ENCODE measurements at regions of chr16 and their contacts with region 1.

Region 1: DNA sequence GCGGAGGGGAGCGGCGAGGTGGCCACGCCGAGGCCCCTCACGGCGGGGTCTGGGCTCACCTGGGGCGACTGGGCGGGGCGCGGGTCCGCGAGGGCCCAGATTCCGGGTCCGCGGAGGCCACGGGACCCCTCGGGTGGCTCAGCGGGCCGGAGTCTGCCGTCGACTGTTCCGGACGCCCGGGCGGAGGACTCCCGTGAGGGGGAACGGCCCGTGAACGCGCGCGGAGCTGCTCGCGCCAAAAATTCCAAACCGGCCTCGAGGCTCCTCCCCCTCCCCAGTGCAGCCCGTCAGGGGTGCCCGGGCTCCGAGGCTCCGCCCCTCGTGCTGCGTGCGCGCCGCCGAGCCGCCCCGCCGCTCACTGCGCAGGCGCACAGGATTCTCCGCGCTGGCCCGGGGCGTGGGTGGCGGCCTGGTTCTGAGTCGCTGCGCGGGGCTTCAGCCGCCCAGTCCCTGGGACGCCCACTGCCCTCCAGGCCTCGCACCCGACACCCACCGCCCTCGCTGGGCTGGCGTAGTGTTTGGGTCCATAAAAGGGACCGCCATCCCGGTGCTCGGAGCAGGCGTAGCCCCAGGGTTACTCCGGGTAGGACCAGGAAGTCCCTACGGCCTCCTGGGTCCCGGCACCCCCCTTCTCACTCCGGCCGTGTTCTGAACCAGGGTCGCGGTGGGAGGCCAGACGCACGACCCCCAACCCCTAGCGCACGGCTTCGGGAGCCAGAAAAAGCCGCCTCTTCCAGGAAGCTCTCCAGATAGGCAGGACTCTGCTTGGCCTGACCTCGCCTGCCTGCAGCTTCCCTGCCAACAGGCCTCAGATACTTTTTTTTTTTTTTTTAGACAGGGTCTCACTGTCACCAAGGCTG is at the start of gene PKMYT1:
- DNase-seq: peak; percentile 96
- ATAC-seq: peak; percentile 93
- H3K4me3 ChIP-seq: peak within 1 kb of the TSS; percentile 57 to 96 (median 82)
- H3K4me3 Mint-ChIP-seq: peak within 1 kb of the TSS; percentile 81
- H3K27ac ChIP-seq: peak within 1 kb of the TSS; percentile 71 to 83
- H3K27ac Mint-ChIP-seq: peak within 1 kb of the TSS; percentile 84
- H3K4me1 ChIP-seq: peaks cover 18 to 39% of the 10 kb centered on the region in 2 donors
- H3K4me1 Mint-ChIP-seq: peaks cover 21% of the 10 kb centered on the region
- H3K27me3 ChIP-seq: peaks cover 0 to 8% (median 1%) of the 10 kb centered on the region in 4 experiments
- H3K27me3 Mint-ChIP-seq: no peaks in the 10 kb centered on the region
- CTCF ChIP-seq: no peak
- total RNA-seq, gene PKMYT1: 0.67 and 1.0 TPM in 2 replicates

Region 2: GRCh38 chr16:2838928-2839327 is 141.5 kb before region 1 on chr16:
- CTCF ChIA-PET with region 1: no interaction called
- POLR2A ChIA-PET with region 1: no interaction called
- intact Hi-C with region 1: no loop called
- DNase-seq: peak; percentile 46
- ATAC-seq: peak; percentile 43
- H3K4me3 ChIP-seq: no peak overlapping the region
- H3K4me3 Mint-ChIP-seq: no peak overlapping the region
- H3K27ac ChIP-seq: no peak overlapping the region
- H3K27ac Mint-ChIP-seq: no peak overlapping the region
- H3K4me1 ChIP-seq: peaks cover 15 to 29% of the 10 kb centered on the region in 2 donors
- H3K4me1 Mint-ChIP-seq: peaks cover 8% of the 10 kb centered on the region
- H3K27me3 ChIP-seq: peaks cover 0 to 27% (median 0%) of the 10 kb centered on the region in 4 experiments
- H3K27me3 Mint-ChIP-seq: peaks cover 31% of the 10 kb centered on the region
- CTCF ChIP-seq: peak; percentile 29

Region 3: DNA sequence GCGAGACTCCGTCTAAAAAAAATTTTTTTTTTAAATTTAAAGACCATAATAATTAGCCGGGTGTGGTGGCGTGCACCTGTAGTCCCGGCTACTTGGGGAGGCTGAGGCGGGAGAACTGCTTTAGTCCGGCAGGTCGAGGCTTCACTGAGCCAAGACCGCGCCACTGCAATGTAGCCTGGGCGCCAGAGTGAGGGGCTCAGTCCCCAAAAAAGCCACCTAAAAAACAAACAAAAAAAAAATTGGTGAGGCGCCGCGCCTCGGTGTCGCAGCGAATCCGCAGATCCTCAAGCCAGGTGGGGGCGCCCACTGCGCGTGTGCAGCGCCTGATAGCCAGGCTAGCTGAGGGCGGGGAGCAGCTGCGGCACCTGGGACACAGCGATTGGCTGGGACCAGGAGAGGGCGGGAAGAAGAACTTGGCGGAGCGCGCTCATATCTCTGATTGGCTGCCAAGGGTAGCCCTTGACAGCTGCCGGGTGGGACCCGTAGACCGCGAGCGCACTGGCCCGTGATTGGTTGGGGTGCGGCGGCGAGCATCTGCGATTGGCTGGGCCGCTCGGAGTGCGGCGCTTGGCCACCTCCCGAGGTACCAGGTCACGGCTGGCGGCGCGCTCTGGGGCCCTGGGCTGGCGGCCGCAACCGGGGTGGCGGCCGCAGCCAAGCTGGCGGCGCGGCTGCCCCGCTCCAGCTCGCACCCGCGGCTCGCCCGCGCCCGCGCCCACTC is 23.3 kb after region 1 on chr16:
- CTCF ChIA-PET with region 1: interaction called, 4 read pairs
- POLR2A ChIA-PET with region 1: no interaction called
- intact Hi-C with region 1: loop called (anchors 1 kb)
- DNase-seq: peak; percentile 99
- ATAC-seq: peak; percentile 97
- H3K4me3 ChIP-seq: no peak overlapping the region
- H3K4me3 Mint-ChIP-seq: peak overlapping the region; percentile 85
- H3K27ac ChIP-seq: no peak overlapping the region
- H3K27ac Mint-ChIP-seq: peak overlapping the region; percentile 89
- H3K4me1 ChIP-seq: peaks cover 25 to 31% of the 10 kb centered on the region in 2 donors
- H3K4me1 Mint-ChIP-seq: peaks cover 25% of the 10 kb centered on the region
- H3K27me3 ChIP-seq: peaks cover 0 to 9% (median 4%) of the 10 kb centered on the region in 4 experiments
- H3K27me3 Mint-ChIP-seq: peaks cover 9% of the 10 kb centered on the region
- CTCF ChIP-seq: peak; percentile 57